Posterior vena cava (tissue), 2 donors: ENCODE measurements at regions of chr20 and their contacts with region 1.

Region 1: GRCh38 chr20:51966291-51966971 is 164.1 kb upstream of the SALL4 start:
- DNase-seq: no peak

Region 2: GRCh38 chr20:50569864-50570836 is 1396.3 kb before region 1 on chr20:
- intact Hi-C with region 1: loop called in 1 of 2 experiments (anchors 5 kb)
- DNase-seq: no peak